Naive thymus-derived CD4-positive, alpha-beta T cell (primary cell): ENCODE measurements at regions of chr17 and their contacts with region 1.

Region 1: GRCh38 chr17:81927653-81928543 is at the start of gene MAFG:
- DNase-seq: peak; percentile 81 to 93 (median 88)
- ATAC-seq: peak; percentile 72
- H3K4me3 ChIP-seq: peak within 1 kb of the TSS; percentile 58
- H3K4me3 Mint-ChIP-seq: peak within 1 kb of the TSS; percentile 77 to 91 (median 84)
- H3K27ac ChIP-seq: peak within 1 kb of the TSS; percentile 71
- H3K27ac Mint-ChIP-seq: peak within 1 kb of the TSS; percentile 69 to 95 (median 88)
- H3K4me1 ChIP-seq: peaks cover 10 to 31% of the 10 kb centered on the region in 2 donors
- H3K4me1 Mint-ChIP-seq: peaks cover 9 to 29% (median 20%) of the 10 kb centered on the region in 7 donors
- H3K27me3 ChIP-seq: peaks cover 0 to 13% of the 10 kb centered on the region in 2 donors
- H3K27me3 Mint-ChIP-seq: peaks cover 0 to 18% (median 0%) of the 10 kb centered on the region in 5 donors
- total RNA-seq, gene MAFG: 12.9 to 28.1 (median 18.1) TPM

Region 2: GRCh38 chr17:81601525-81602120 is 326.3 kb before region 1 on chr17:
- CTCF ChIA-PET with region 1: no interaction called
- POLR2A ChIA-PET with region 1: no interaction called
- intact Hi-C with region 1: no loop called
- DNase-seq: peak in 8 of 9 donors; percentile 30 to 69 (median 60)
- ATAC-seq: peak; percentile 92
- H3K4me3 ChIP-seq: no peak overlapping the region
- H3K4me3 Mint-ChIP-seq: no peak overlapping the region
- H3K27ac ChIP-seq: no peak overlapping the region
- H3K27ac Mint-ChIP-seq: peak overlapping the region in 3 of 9 donors; percentile 1 to 48 (median 25)
- H3K4me1 ChIP-seq: peaks cover 0 to 6% of the 10 kb centered on the region in 2 donors
- H3K4me1 Mint-ChIP-seq: peaks cover 2 to 14% (median 9%) of the 10 kb centered on the region in 7 donors
- H3K27me3 ChIP-seq: no peaks in the 10 kb centered on the region
- H3K27me3 Mint-ChIP-seq: no peaks in the 10 kb centered on the region

Region 3: GRCh38 chr17:81871387-81872230 is 56.3 kb before region 1 on chr17:
- CTCF ChIA-PET with region 1: no interaction called
- POLR2A ChIA-PET with region 1: interaction called, 9 read pairs
- intact Hi-C with region 1: loop called (anchors 5 kb)
- DNase-seq: peak; percentile 93 to 99 (median 97)
- ATAC-seq: peak; percentile 45
- H3K4me3 ChIP-seq: peak overlapping the region; percentile 93
- H3K4me3 Mint-ChIP-seq: peak overlapping the region; percentile 82 to 91 (median 86)
- H3K27ac ChIP-seq: peak overlapping the region; percentile 98
- H3K27ac Mint-ChIP-seq: peak overlapping the region; percentile 88 to 97 (median 95)
- H3K4me1 ChIP-seq: peaks cover 25 to 28% of the 10 kb centered on the region in 2 donors
- H3K4me1 Mint-ChIP-seq: peaks cover 11 to 43% (median 41%) of the 10 kb centered on the region in 7 donors
- H3K27me3 ChIP-seq: no peaks in the 10 kb centered on the region
- H3K27me3 Mint-ChIP-seq: no peaks in the 10 kb centered on the region

Region 4: GRCh38 chr17:81890447-81891299 is 37.2 kb before region 1 on chr17:
- CTCF ChIA-PET with region 1: no interaction called
- POLR2A ChIA-PET with region 1: interaction called, 3 read pairs
- intact Hi-C with region 1: loop called in 1 of 2 experiments (anchors 5 kb)
- DNase-seq: peak in 1 of 9 donors; percentile 47
- ATAC-seq: no peak
- H3K4me3 ChIP-seq: peak overlapping the region; percentile 79
- H3K4me3 Mint-ChIP-seq: peak overlapping the region; percentile 78 to 96 (median 87)
- H3K27ac ChIP-seq: peak overlapping the region; percentile 82
- H3K27ac Mint-ChIP-seq: peak overlapping the region; percentile 84 to 97 (median 95)
- H3K4me1 ChIP-seq: peaks cover 16 to 20% of the 10 kb centered on the region in 2 donors
- H3K4me1 Mint-ChIP-seq: peaks cover 0 to 32% (median 19%) of the 10 kb centered on the region in 7 donors
- H3K27me3 ChIP-seq: no peaks in the 10 kb centered on the region
- H3K27me3 Mint-ChIP-seq: no peaks in the 10 kb centered on the region

Region 5: GRCh38 chr17:81911277-81911961 is 16.5 kb before region 1 on chr17 and contains the start of gene PCYT2:
- CTCF ChIA-PET with region 1: no interaction called
- POLR2A ChIA-PET with region 1: interaction called, 23 read pairs
- intact Hi-C with region 1: loop called (anchors 2 kb)
- DNase-seq: peak; percentile 84 to 95 (median 92)
- ATAC-seq: peak; percentile 97
- H3K4me3 ChIP-seq: peak within 1 kb of the TSS; percentile 70
- H3K4me3 Mint-ChIP-seq: peak within 1 kb of the TSS; percentile 72 to 92 (median 86)
- H3K27ac ChIP-seq: peak within 1 kb of the TSS; percentile 68
- H3K27ac Mint-ChIP-seq: peak within 1 kb of the TSS in 6 of 9 donors; percentile 33 to 85 (median 54)
- H3K4me1 ChIP-seq: peaks cover 8 to 12% of the 10 kb centered on the region in 2 donors
- H3K4me1 Mint-ChIP-seq: peaks cover 6 to 33% (median 16%) of the 10 kb centered on the region in 7 donors
- H3K27me3 ChIP-seq: no peaks in the 10 kb centered on the region
- H3K27me3 Mint-ChIP-seq: no peaks in the 10 kb centered on the region
- total RNA-seq, gene PCYT2: 17.5 to 43.6 (median 35.2) TPM

Region 6: GRCh38 chr17:81917565-81918332 is 10.1 kb before region 1 on chr17 and contains the start of gene SIRT7:
- CTCF ChIA-PET with region 1: interaction called, 4 read pairs
- POLR2A ChIA-PET with region 1: interaction called, 23 read pairs
- intact Hi-C with region 1: loop called (anchors 1 kb)
- DNase-seq: peak; percentile 69 to 83 (median 78)
- ATAC-seq: peak; percentile 93
- H3K4me3 ChIP-seq: peak within 1 kb of the TSS; percentile 49
- H3K4me3 Mint-ChIP-seq: peak within 1 kb of the TSS; percentile 81 to 92 (median 88)
- H3K27ac ChIP-seq: peak within 1 kb of the TSS; percentile 80
- H3K27ac Mint-ChIP-seq: peak within 1 kb of the TSS; percentile 82 to 90 (median 85)
- H3K4me1 ChIP-seq: peaks cover 13 to 20% of the 10 kb centered on the region in 2 donors
- H3K4me1 Mint-ChIP-seq: peaks cover 14 to 47% (median 35%) of the 10 kb centered on the region in 7 donors
- H3K27me3 ChIP-seq: no peaks in the 10 kb centered on the region
- H3K27me3 Mint-ChIP-seq: no peaks in the 10 kb centered on the region
- total RNA-seq, gene SIRT7: 56.0 to 81.4 (median 69.7) TPM

Region 7: GRCh38 chr17:81941790-81942553 is 14.1 kb after region 1 on chr17:
- CTCF ChIA-PET with region 1: interaction called, 4 read pairs
- POLR2A ChIA-PET with region 1: interaction called, 4 read pairs
- intact Hi-C with region 1: loop called (anchors 1 kb)
- DNase-seq: no peak
- ATAC-seq: no peak
- H3K4me3 ChIP-seq: no peak overlapping the region
- H3K4me3 Mint-ChIP-seq: no peak overlapping the region
- H3K27ac ChIP-seq: no peak overlapping the region
- H3K27ac Mint-ChIP-seq: no peak overlapping the region
- H3K4me1 ChIP-seq: no peaks in the 10 kb centered on the region
- H3K4me1 Mint-ChIP-seq: peaks cover 0 to 10% (median 6%) of the 10 kb centered on the region in 7 donors
- H3K27me3 ChIP-seq: no peaks in the 10 kb centered on the region
- H3K27me3 Mint-ChIP-seq: peaks cover 0 to 6% (median 0%) of the 10 kb centered on the region in 5 donors

Region 8: DNA sequence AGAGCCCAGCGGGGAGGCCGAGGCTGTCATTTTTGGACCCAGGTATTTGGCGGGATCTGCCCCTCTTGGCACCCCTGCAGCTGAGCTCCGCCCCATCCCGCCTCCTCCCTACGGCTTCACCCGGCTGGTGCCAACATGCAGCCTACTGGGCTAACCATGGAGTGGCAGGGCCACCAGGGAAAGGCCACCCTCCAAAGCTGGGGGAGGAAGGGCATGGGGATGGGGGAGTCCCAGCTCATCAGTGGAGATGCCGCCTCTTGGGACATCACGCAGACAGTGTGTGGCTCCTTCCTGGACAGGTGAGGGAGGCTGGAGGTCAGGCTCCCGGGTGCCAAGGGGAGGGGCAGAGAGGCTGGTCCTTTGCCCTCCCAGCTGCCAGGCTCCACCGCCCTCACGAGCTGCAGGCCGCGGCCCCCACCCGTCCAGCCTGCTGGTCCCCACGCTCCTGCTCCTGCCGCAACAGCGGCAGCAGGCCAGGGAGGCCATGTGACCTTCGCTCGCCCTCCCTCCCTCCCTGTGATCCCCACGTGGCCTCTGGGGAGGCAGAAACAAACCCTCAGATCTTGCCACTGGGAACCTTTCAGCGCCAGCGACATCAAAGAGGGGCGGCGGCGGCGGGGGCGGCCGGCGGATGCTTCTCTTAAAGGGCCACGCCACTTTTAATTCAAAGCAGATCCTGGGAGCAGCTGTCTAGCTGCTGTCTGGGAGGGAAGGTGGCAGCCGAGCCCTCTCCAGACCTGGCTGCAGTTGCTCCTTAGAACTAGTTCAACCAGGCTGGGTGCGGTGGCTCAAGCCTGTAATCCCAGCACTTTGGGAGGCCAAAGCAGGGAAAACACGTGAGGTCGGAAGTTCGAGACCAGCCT is 39.9 kb after region 1 on chr17:
- CTCF ChIA-PET with region 1: interaction called, 3 read pairs
- POLR2A ChIA-PET with region 1: no interaction called
- intact Hi-C with region 1: loop called in 1 of 2 experiments (anchors 5 kb)
- DNase-seq: peak; percentile 62 to 90 (median 89)
- ATAC-seq: peak; percentile 97
- H3K4me3 ChIP-seq: peak overlapping the region; percentile 43
- H3K4me3 Mint-ChIP-seq: peak overlapping the region; percentile 60 to 84 (median 76)
- H3K27ac ChIP-seq: peak overlapping the region; percentile 58
- H3K27ac Mint-ChIP-seq: peak overlapping the region; percentile 68 to 93 (median 84)
- H3K4me1 ChIP-seq: peaks cover 23% of the 10 kb centered on the region in 2 donors
- H3K4me1 Mint-ChIP-seq: peaks cover 4 to 40% (median 20%) of the 10 kb centered on the region in 7 donors
- H3K27me3 ChIP-seq: peaks cover 0 to 2% of the 10 kb centered on the region in 2 donors
- H3K27me3 Mint-ChIP-seq: peaks cover 0 to 25% (median 0%) of the 10 kb centered on the region in 5 donors

Region 9: DNA sequence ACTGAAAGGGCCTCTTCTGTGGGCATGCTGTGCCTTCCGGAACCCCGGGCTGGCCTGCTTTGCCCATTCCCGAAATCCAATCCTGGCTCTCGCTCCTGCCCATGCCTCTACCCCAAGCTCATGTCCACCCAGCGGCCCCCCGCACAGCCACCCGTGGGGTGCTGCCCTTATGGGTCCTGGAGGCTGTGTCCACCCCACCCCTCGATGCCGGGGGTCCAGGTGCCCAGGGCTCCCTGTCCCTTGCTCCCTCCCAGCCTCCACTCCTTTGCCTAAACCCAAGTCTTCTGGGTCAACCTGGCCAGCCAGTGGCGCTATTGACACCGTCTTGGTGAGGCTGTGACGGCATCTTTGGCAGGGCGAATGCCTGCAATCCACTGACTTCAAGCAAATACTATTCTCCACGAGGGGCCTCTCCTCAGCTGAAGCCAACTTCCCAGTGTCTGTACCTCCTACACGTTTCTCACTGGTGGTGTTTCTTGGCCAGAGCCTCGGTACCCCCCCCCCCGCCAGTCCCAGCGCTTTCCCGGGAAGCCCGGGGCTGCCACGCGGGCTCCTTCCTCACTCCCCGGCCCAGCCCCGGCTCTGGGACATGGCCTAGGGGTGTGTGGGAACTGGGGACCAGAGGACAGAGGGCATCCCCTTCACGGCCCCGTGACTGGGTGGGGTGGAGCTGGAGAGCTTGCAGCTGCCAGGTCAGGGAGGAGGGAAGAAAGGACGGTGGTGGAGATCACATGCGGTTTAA is 149.9 kb after region 1 on chr17:
- CTCF ChIA-PET with region 1: no interaction called
- POLR2A ChIA-PET with region 1: no interaction called
- intact Hi-C with region 1: no loop called
- DNase-seq: no peak
- ATAC-seq: no peak
- H3K4me3 ChIP-seq: no peak overlapping the region
- H3K4me3 Mint-ChIP-seq: no peak overlapping the region
- H3K27ac ChIP-seq: no peak overlapping the region
- H3K27ac Mint-ChIP-seq: no peak overlapping the region
- H3K4me1 ChIP-seq: no peaks in the 10 kb centered on the region
- H3K4me1 Mint-ChIP-seq: no peaks in the 10 kb centered on the region
- H3K27me3 ChIP-seq: no peaks in the 10 kb centered on the region
- H3K27me3 Mint-ChIP-seq: peaks cover 0 to 4% (median 0%) of the 10 kb centered on the region in 5 donors